ENCODE measurements at regions of chr19 and their contacts with region 1.

Region 1: GRCh38 chr19:39474139-39474622 is 6.5 kb upstream of the TIMM50 start:
- DNase-seq: peak; percentile 73
- ATAC-seq: peak; percentile 69

Region 2: GRCh38 chr19:39532233-39533002 is 58.2 kb after region 1 on chr19 and contains the start of gene EID2B:
- intact Hi-C with region 1: loop called (anchors 2 kb)
- DNase-seq: peak; percentile 98
- ATAC-seq: peak; percentile 99
- total RNA-seq, gene EID2B: 1.7 TPM